CD4-positive, alpha-beta T cell (primary cell): ENCODE measurements at regions of chr19 and their contacts with region 1.

Region 1: GRCh38 chr19:55653758-55654539 is 886 bp upstream of the U2AF2 start:
- DNase-seq: peak; percentile 98 to 100 (median 100)
- ATAC-seq: peak; percentile 79
- H3K4me3 ChIP-seq: peak overlapping the region; percentile 70
- H3K4me3 Mint-ChIP-seq: peak overlapping the region; percentile 94
- H3K27ac ChIP-seq: peak overlapping the region; percentile 96 to 100
- H3K27ac Mint-ChIP-seq: peak overlapping the region; percentile 93
- H3K4me1 ChIP-seq: peaks cover 46% of the 10 kb centered on the region
- H3K4me1 Mint-ChIP-seq: peaks cover 43% of the 10 kb centered on the region
- H3K27me3 ChIP-seq: no peaks in the 10 kb centered on the region
- H3K27me3 Mint-ChIP-seq: no peaks in the 10 kb centered on the region
- CTCF ChIP-seq: peak; percentile 100

Region 2: GRCh38 chr19:55461259-55461973 is 192.5 kb before region 1 on chr19 and contains the start of gene ISOC2:
- CTCF ChIA-PET with region 1: no interaction called
- POLR2A ChIA-PET with region 1: no interaction called
- intact Hi-C with region 1: no loop called
- DNase-seq: peak; percentile 100
- ATAC-seq: peak; percentile 98
- H3K4me3 ChIP-seq: peak within 1 kb of the TSS; percentile 83
- H3K4me3 Mint-ChIP-seq: peak within 1 kb of the TSS; percentile 96
- H3K27ac ChIP-seq: peak within 1 kb of the TSS; percentile 47 to 72
- H3K27ac Mint-ChIP-seq: peak within 1 kb of the TSS; percentile 68
- H3K4me1 ChIP-seq: peaks cover 19% of the 10 kb centered on the region
- H3K4me1 Mint-ChIP-seq: peaks cover 17% of the 10 kb centered on the region
- H3K27me3 ChIP-seq: no peaks in the 10 kb centered on the region
- H3K27me3 Mint-ChIP-seq: no peaks in the 10 kb centered on the region
- CTCF ChIP-seq: no peak
- total RNA-seq, gene ISOC2: 1.5 to 2.2 TPM

Region 3: GRCh38 chr19:55476100-55476775 is 177.7 kb before region 1 on chr19 and contains the start of gene ZNF628:
- CTCF ChIA-PET with region 1: no interaction called
- POLR2A ChIA-PET with region 1: interaction called, 18 read pairs
- intact Hi-C with region 1: no loop called
- DNase-seq: peak; percentile 94 to 99 (median 98)
- ATAC-seq: peak; percentile 93
- H3K4me3 ChIP-seq: peak within 1 kb of the TSS; percentile 76
- H3K4me3 Mint-ChIP-seq: peak within 1 kb of the TSS; percentile 91
- H3K27ac ChIP-seq: peak within 1 kb of the TSS; percentile 72 to 77
- H3K27ac Mint-ChIP-seq: peak within 1 kb of the TSS; percentile 93
- H3K4me1 ChIP-seq: peaks cover 26% of the 10 kb centered on the region
- H3K4me1 Mint-ChIP-seq: peaks cover 38% of the 10 kb centered on the region
- H3K27me3 ChIP-seq: no peaks in the 10 kb centered on the region
- H3K27me3 Mint-ChIP-seq: no peaks in the 10 kb centered on the region
- CTCF ChIP-seq: no peak
- total RNA-seq, gene ZNF628: 26.6 to 27.2 TPM

Region 4: GRCh38 chr19:55624109-55625003 is 29.6 kb before region 1 on chr19 and contains the start of gene ZNF784:
- CTCF ChIA-PET with region 1: no interaction called
- POLR2A ChIA-PET with region 1: interaction called, 35 read pairs
- intact Hi-C with region 1: no loop called
- DNase-seq: peak; percentile 88 to 98 (median 93)
- ATAC-seq: peak; percentile 69
- H3K4me3 ChIP-seq: peak within 1 kb of the TSS; percentile 68
- H3K4me3 Mint-ChIP-seq: peak within 1 kb of the TSS; percentile 98
- H3K27ac ChIP-seq: peak within 1 kb of the TSS; percentile 89 to 94
- H3K27ac Mint-ChIP-seq: peak within 1 kb of the TSS; percentile 100
- H3K4me1 ChIP-seq: peaks cover 56% of the 10 kb centered on the region
- H3K4me1 Mint-ChIP-seq: peaks cover 55% of the 10 kb centered on the region
- H3K27me3 ChIP-seq: no peaks in the 10 kb centered on the region
- H3K27me3 Mint-ChIP-seq: no peaks in the 10 kb centered on the region
- CTCF ChIP-seq: no peak
- total RNA-seq, gene ZNF784: 11.2 to 11.8 TPM

Region 5: DNA sequence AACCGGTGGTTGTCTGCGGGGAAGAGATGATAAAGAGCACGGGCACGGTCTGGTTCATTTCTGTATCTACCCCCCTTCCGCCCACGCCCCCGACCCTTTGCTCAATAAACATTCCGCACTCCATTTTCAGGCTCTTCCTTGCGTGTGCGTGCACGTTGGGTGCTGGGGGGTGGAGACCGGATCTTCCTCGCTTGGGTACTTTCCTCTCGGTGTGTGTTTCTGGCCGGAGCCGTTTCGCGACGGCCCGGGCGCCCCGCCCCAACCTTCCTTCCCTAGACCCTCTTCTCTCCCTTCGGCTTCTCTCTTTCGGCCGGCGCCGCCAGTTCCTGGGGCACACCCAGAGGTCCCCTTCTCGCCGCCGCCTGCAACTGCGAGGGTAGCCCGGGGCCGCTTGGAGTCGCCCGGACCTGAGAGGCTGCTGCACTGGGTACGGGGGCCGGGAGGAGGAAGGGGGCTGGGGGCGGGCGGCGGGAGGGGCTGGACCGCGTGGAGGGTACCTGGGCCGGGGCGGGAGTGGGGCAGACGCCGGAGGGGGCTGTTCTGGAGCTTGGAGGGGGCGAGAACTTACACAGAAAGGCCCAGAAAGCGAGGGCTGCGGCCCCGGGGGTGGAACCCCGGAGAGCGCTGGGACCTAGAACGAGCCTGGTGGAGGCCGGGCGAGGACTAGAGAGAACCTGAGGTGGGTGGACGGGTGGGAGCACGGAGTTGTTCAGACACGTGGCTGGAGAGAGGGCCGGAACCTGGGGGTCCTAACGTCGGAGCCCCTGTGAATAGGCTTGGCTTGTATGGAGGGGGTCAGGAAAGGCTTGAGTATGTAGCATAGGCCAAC is 10.4 kb before region 1 on chr19 and contains the start of gene ZNF581:
- CTCF ChIA-PET with region 1: interaction called, 29 read pairs
- POLR2A ChIA-PET with region 1: interaction called, 30 read pairs
- intact Hi-C with region 1: no loop called
- DNase-seq: peak; percentile 63 to 92 (median 74)
- ATAC-seq: peak; percentile 54
- H3K4me3 ChIP-seq: peak within 1 kb of the TSS; percentile 78
- H3K4me3 Mint-ChIP-seq: peak within 1 kb of the TSS; percentile 89
- H3K27ac ChIP-seq: peak within 1 kb of the TSS; percentile 71 to 78
- H3K27ac Mint-ChIP-seq: peak within 1 kb of the TSS; percentile 88
- H3K4me1 ChIP-seq: peaks cover 77% of the 10 kb centered on the region
- H3K4me1 Mint-ChIP-seq: peaks cover 54% of the 10 kb centered on the region
- H3K27me3 ChIP-seq: no peaks in the 10 kb centered on the region
- H3K27me3 Mint-ChIP-seq: no peaks in the 10 kb centered on the region
- CTCF ChIP-seq: no peak
- total RNA-seq, gene ZNF581: 23.1 to 24.7 TPM

Region 6: DNA sequence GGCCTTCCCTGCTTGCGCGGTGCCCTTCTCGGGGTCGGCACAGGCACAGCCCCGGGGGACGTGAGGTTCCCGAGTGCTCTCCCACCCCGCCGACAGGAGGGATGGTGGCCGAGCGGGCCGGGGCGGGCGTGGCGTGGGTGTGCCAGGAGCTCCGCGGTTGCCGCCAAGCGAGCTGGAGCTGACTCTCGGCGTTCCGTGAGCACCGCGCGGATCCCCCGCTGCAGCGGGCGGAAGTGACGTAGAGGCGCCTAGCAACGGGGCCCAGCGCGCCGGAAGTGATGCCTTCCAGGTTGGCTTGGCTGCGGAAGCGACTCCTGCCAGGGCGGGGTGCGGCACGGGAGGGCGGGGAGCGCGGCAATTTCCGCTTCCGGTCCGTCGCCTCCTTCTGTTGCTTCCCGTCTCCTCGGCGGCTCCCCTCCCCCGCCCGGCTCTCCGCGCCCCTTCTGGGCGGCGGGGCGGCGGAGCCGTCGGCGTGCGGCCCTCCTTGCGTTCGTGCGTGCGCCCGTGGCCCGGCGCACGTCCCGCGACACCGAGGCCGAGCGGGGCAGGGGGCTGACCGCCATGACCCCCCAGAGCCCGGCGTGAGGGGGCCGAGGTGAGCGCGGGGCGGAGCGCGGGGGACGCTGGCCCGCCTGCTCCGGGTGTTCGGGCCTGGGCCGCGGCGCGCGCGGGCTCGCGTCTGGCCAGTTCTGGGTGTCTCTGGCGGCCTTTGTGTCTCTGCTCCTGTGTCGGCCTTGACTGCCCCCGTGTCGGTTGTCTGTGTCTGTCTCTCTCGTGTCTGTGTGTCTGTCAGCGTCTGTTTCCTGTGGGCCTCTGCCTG is 21.1 kb after region 1 on chr19 and contains the start of gene EPN1:
- CTCF ChIA-PET with region 1: interaction called, 5 read pairs
- POLR2A ChIA-PET with region 1: interaction called, 9 read pairs
- intact Hi-C with region 1: loop called (anchors 1 kb)
- DNase-seq: peak; percentile 95 to 99 (median 97)
- ATAC-seq: peak; percentile 92
- H3K4me3 ChIP-seq: peak within 1 kb of the TSS; percentile 73
- H3K4me3 Mint-ChIP-seq: peak within 1 kb of the TSS; percentile 95
- H3K27ac ChIP-seq: peak within 1 kb of the TSS; percentile 69 to 89
- H3K27ac Mint-ChIP-seq: peak within 1 kb of the TSS; percentile 90
- H3K4me1 ChIP-seq: peaks cover 59% of the 10 kb centered on the region
- H3K4me1 Mint-ChIP-seq: peaks cover 50% of the 10 kb centered on the region
- H3K27me3 ChIP-seq: no peaks in the 10 kb centered on the region
- H3K27me3 Mint-ChIP-seq: no peaks in the 10 kb centered on the region
- CTCF ChIP-seq: no peak
- total RNA-seq, gene EPN1: 39.0 to 40.5 TPM